ENCODE measurements at regions of chr12 and their contacts with region 1.

Region 1: GRCh38 chr12:104215638-104216297 is at the start of gene TXNRD1:
- DNase-seq: peak; percentile 85
- H3K4me3 ChIP-seq: peak within 1 kb of the TSS; percentile 42 to 64 (median 46)
- H3K27ac ChIP-seq: peak within 1 kb of the TSS; percentile 88
- H3K4me1 ChIP-seq: peaks cover 38% of the 10 kb centered on the region
- H3K27me3 ChIP-seq: no peaks in the 10 kb centered on the region
- CTCF ChIP-seq: peak; percentile 94 to 95
- POLR2A ChIP-seq: peak; percentile 65
- total RNA-seq, gene TXNRD1: 465 and 566 TPM in 2 replicates

Region 2: GRCh38 chr12:104276273-104277131 is 60.7 kb after region 1 on chr12:
- CTCF ChIA-PET with region 1: interaction called, 7 read pairs
- POLR2A ChIA-PET with region 1: interaction called, 10 read pairs
- dilution Hi-C with region 1: no loop called
- intact Hi-C with region 1: loop called (anchors 1 kb)
- DNase-seq: no peak
- H3K4me3 ChIP-seq: no peak overlapping the region
- H3K27ac ChIP-seq: no peak overlapping the region
- H3K4me1 ChIP-seq: peaks cover 34% of the 10 kb centered on the region
- H3K27me3 ChIP-seq: no peaks in the 10 kb centered on the region
- CTCF ChIP-seq: no peak
- POLR2A ChIP-seq: no peak

Region 3: GRCh38 chr12:104286538-104287482 is 71.0 kb after region 1 on chr12:
- CTCF ChIA-PET with region 1: interaction called, 49 read pairs
- POLR2A ChIA-PET with region 1: interaction called, 222 read pairs
- dilution Hi-C with region 1: loop called (anchors 5 kb)
- intact Hi-C with region 1: loop called (anchors 1 kb)
- DNase-seq: peak; percentile 99
- H3K4me3 ChIP-seq: peak overlapping the region; percentile 67 to 98 (median 76)
- H3K27ac ChIP-seq: peak overlapping the region; percentile 78
- H3K4me1 ChIP-seq: peaks cover 34% of the 10 kb centered on the region
- H3K27me3 ChIP-seq: no peaks in the 10 kb centered on the region
- CTCF ChIP-seq: no peak
- POLR2A ChIP-seq: peak; percentile 96

Region 4: DNA sequence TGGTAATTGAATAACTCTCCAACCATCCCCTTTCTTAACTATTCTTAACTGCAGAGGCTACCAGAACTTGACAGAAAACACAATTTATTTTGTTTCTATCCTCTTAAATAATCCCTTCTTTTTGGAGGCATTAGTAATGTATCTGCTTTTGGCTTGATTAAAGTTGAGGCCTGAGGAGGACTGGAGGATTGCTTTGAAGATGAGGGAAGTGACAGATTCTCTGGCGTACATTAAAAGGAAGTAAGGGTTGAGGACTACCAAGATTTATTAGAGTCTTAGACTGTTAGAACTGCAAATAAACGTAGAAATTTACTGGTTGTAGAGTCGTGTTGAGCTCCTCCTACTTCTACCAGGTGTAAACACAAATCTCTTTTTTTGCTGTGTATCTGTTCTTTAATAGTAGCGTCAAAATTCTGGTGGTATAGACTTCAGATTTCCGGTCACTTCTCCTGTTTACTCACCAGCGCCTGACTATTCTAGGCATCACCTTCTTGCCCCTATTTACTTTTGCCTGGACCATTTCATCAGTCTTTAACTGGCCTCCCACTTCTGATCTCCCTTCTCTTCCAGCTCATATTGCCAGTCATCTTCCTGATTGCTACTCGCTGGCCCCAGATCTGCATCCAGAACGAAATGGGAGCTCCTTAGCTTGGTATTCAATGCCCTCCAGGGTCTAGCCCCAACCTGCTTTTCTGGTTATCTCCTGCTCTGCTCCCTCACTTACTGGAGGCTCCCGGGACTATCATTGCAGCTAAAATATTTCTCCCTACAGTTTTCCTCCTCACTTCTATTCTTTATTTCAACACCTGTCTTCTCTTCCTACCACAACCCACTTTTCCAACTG is 79.3 kb after region 1 on chr12:
- CTCF ChIA-PET with region 1: interaction called, 18 read pairs
- POLR2A ChIA-PET with region 1: interaction called, 222 read pairs
- dilution Hi-C with region 1: no loop called
- intact Hi-C with region 1: loop called (anchors 1 kb)
- DNase-seq: no peak
- H3K4me3 ChIP-seq: peak overlapping the region in 1 of 3 experiments; percentile 8
- H3K27ac ChIP-seq: no peak overlapping the region
- H3K4me1 ChIP-seq: peaks cover 63% of the 10 kb centered on the region
- H3K27me3 ChIP-seq: no peaks in the 10 kb centered on the region
- CTCF ChIP-seq: no peak
- POLR2A ChIP-seq: peak; percentile 15

Region 5: DNA sequence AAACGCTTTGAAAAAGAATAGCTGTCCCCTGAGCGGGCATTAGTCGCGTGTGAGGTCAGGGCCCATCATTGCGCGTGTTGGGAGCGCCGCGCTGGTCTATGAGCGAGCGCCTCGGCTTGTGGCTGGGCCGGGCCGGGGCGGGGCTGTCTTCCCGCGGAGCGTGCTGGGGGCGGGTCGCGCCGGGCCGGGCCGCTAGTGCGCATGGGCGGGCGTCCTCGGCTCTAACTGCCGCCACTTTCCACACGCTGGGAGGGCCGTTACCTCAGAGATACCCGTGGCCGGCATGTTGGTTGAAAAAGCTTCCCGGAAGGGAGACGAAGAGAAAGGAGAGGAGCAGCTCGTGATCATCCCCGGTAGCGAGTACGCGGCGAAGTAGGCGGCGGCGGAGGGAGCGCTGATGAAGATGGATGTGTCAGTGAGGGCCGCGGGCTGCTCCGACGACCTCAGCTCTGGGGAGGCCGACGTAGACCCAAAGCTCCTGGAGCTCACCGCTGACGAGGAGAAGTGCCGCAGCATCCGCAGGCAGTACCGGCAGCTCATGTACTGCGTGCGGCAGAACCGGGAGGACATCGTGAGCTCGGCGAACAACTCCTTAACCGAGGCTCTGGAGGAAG is 87.9 kb after region 1 on chr12 and contains the start of gene EID3:
- CTCF ChIA-PET with region 1: interaction called, 18 read pairs
- POLR2A ChIA-PET with region 1: interaction called, 222 read pairs
- dilution Hi-C with region 1: no loop called
- intact Hi-C with region 1: loop called (anchors 1 kb)
- DNase-seq: peak; percentile 86
- H3K4me3 ChIP-seq: peak within 1 kb of the TSS; percentile 11 to 37 (median 36)
- H3K27ac ChIP-seq: peak within 1 kb of the TSS; percentile 46
- H3K4me1 ChIP-seq: peaks cover 67% of the 10 kb centered on the region
- H3K27me3 ChIP-seq: no peaks in the 10 kb centered on the region
- CTCF ChIP-seq: no peak
- POLR2A ChIP-seq: peak; percentile 46
- total RNA-seq, gene EID3: 12.7 and 14.5 TPM in 2 replicates

Region 6: DNA sequence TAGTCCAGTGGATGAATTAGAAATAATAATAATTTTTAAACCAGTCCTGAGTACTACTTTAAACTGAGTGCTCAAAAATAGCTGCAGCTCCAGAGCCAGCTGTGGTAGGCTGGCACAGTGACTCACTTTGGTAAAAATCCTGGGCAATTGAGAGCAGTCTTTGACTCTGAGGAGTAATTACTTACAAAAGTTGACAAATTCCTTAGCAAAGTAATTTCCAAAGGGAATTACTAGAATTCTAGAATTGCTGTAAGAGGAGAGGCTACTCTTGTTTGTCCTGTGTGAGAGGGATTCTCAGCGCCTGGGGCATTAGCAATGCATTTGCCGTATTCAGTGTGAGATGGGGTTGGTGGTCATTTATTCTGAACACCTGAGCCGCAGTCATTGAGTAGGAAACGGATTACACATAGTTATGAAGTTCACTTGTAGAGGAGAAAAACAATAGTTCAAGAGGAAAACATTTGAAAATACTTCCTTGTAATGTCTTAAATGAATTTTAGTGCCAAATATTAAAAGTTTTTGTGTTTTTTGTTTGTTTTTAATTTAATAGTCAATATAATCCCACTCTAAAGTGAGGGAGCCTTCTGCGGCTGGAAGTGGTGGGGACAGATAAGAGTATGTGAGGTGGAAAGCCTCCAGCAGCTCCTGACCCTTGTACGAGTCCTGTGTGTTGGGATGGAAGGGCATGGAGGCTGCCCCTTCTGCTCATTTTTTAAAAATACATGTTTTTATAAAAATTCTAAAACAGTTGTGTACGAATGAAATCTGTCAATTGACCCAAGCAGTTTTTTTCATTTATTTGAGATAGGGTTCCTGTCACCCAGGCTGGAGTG is 129.7 kb after region 1 on chr12:
- CTCF ChIA-PET with region 1: no interaction called
- POLR2A ChIA-PET with region 1: no interaction called
- dilution Hi-C with region 1: no loop called
- intact Hi-C with region 1: no loop called
- DNase-seq: no peak
- H3K4me3 ChIP-seq: no peak overlapping the region
- H3K27ac ChIP-seq: no peak overlapping the region
- H3K4me1 ChIP-seq: no peaks in the 10 kb centered on the region
- H3K27me3 ChIP-seq: no peaks in the 10 kb centered on the region
- CTCF ChIP-seq: no peak
- POLR2A ChIP-seq: peak; percentile 29

Region 7: DNA sequence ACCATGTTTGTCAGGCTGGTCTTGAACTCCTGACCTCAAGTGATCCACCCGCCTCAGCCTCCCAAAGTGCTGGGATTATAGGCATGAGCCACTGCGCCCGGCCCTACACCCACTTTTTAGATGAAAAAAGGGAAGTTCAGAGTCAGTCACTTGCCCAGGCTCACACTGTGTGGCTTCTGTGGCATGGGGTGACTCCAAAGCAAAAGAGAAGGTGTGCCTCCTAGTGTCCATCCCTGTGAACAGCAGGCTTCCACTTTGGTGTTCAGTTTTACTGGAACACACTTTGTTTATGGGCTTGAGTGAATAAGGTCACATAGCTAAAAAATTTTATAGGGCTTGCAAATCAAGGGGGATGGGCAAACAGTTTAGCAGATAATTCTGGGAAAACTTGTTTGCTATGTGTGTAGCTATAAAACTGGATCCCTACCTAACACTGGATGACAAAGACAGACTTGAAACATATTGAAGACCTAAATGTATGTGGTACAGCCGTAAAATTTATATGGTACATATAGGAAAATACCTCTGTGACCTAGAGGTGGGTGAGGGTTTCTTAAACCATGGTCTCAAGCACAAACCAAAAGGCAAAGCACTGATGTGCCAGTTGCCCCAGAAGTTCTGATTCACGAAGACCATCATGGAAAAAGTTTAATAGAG is 142.7 kb after region 1 on chr12:
- CTCF ChIA-PET with region 1: no interaction called
- POLR2A ChIA-PET with region 1: no interaction called
- dilution Hi-C with region 1: no loop called
- intact Hi-C with region 1: loop called (anchors 1 kb)
- DNase-seq: peak; percentile 66
- H3K4me3 ChIP-seq: no peak overlapping the region
- H3K27ac ChIP-seq: no peak overlapping the region
- H3K4me1 ChIP-seq: peaks cover 2% of the 10 kb centered on the region
- H3K27me3 ChIP-seq: no peaks in the 10 kb centered on the region
- CTCF ChIP-seq: peak; percentile 72 to 81
- POLR2A ChIP-seq: no peak

Region 8: GRCh38 chr12:104467346-104467837 is 251.6 kb after region 1 on chr12:
- CTCF ChIA-PET with region 1: no interaction called
- POLR2A ChIA-PET with region 1: no interaction called
- dilution Hi-C with region 1: no loop called
- intact Hi-C with region 1: no loop called
- DNase-seq: no peak
- H3K4me3 ChIP-seq: no peak overlapping the region
- H3K27ac ChIP-seq: no peak overlapping the region
- H3K4me1 ChIP-seq: peaks cover 14% of the 10 kb centered on the region
- H3K27me3 ChIP-seq: no peaks in the 10 kb centered on the region
- CTCF ChIP-seq: no peak
- POLR2A ChIP-seq: no peak

Measured in endothelial cell of umbilical vein (primary cell).